ENCODE measurements at regions of chr10 and their contacts with region 1.

Region 1: DNA sequence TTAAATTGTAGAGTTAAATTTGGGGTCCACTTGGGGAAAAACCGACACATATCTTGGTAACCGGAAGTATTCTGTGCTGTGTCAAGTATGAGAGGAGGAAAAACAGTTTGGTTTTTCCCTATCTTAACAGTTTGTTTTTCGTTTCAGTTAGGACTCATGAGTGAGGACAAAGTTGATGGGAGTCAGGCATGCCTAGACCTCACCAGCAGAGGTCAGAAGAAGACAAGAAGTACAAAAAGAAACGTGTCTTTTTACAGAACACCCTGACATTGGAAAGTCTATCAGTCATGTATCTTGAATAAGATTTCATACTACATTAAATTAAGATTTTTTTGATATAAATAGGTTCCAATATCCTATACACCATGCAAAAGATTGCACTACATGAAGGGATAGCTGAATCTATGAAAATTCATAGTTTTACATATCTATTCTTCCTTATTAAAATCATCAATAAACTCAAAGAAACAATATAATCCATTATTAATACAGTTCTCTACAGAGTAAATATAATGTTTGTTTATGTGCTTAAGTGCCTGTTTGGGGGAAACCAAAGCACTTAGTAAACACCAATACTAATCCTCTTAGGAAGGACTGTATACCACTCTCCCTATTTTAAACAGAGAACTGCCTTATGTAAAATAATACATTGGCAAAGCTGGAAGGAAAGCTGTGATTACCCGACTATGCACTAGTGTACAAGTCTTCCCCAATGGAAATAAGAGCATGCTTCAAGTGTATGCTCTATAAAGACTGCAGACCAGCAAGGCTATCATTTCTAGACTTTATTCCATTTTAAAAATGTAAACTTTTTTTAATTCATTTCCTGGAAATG is 95.6 kb downstream of the USP6NL start:
- DNase-seq: no peak
- H3K4me3 Mint-ChIP-seq: no peak overlapping the region
- H3K27ac Mint-ChIP-seq: no peak overlapping the region
- H3K4me1 Mint-ChIP-seq: peaks cover 11% of the 10 kb centered on the region
- H3K27me3 Mint-ChIP-seq: peaks cover 55% of the 10 kb centered on the region

Region 2: DNA sequence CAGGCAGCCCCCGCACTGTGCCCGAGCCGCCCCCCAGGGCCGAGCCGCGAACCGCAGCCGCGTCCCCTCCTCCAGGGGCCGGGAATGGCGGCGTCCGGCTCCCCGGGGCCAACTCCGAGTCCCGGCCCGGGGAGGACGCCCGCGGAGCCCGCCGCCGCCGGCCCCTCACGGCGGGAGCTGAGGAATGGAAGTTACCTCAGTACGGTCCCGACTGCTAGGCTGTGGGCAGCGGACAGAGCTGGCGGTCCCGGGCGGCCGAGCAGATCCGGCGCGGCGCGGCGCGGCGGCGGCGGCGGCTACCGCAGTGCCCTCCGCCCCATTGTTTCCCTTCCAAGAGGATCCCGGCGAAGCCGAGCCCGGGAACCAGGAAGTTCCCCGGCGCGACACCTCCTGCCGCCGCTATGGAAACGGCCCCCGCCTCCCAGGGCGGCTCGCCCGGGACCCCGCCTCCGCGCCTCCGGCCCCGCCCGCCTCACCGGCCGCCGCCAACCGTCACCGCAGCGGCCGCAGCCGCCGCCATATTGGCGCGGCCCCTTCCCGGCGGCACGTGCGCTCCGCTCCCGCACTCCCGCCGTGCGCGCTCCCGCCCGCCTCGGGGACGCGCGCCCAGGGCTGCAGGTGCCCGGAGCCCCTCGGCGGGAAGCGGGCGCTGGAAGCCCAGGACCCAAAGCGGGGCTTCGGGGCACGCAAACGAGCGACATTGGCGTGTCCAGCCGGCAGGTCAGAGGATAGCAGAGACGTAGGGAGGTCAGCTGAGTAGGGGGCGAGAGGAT is 95.6 kb after region 1 on chr10 and contains the start of gene USP6NL:
- intact Hi-C with region 1: loop called (anchors 5 kb)
- DNase-seq: peak; percentile 50
- H3K4me3 Mint-ChIP-seq: peak within 1 kb of the TSS; percentile 81
- H3K27ac Mint-ChIP-seq: no peak within 1 kb of the TSS
- H3K4me1 Mint-ChIP-seq: peaks cover 13% of the 10 kb centered on the region
- H3K27me3 Mint-ChIP-seq: peaks cover 60% of the 10 kb centered on the region
- total RNA-seq, gene USP6NL: 0.39 and 0.50 TPM in 2 replicates

Region 3: DNA sequence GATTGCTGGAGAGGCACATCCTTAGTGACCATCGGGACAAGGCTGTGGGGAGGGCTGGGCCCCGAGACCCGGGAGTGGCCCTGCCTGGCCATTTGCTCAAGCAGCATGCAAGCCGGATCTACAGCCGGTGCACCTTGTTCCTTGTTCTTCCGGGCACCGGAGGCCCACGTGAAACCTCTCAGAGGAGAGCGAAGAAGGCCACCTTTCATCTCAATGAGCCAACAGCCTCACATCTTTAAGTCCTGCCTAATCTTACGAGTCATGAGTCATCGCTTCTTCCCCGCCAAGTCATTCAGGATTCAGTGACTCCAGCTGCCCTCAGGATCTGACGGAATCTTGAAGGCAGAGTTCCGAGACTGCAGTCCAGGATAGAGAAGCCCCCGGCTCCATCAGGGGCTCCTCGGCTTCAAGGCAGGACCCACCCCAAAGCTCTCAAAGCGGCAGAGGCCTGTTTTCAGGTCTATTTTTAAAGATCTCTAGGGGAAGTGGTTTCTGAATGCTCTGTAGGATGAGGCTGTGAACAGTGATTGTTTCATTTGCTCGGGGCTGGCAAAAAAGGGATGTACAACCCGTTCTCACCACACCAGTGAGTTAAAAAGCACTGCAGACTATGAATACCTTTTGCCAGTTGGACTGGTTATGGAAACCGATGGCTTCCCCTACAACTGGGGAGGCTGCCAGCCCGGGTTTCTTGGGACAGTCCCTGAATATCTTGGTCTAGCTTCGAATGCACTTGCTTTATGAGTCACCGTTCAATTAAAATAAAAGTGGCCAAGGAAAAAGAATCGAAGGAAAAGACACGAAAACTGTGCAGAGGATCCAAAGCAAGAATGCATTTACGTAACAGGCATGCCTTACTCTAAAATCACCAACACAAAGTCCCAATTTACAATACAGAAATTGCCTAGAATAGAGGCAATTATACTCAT is 169.2 kb after region 1 on chr10:
- intact Hi-C with region 1: loop called (anchors 10 kb)
- DNase-seq: peak; percentile 48
- H3K4me3 Mint-ChIP-seq: peak overlapping the region; percentile 48
- H3K27ac Mint-ChIP-seq: peak overlapping the region; percentile 54
- H3K4me1 Mint-ChIP-seq: peaks cover 21% of the 10 kb centered on the region
- H3K27me3 Mint-ChIP-seq: peaks cover 49% of the 10 kb centered on the region

Region 4: DNA sequence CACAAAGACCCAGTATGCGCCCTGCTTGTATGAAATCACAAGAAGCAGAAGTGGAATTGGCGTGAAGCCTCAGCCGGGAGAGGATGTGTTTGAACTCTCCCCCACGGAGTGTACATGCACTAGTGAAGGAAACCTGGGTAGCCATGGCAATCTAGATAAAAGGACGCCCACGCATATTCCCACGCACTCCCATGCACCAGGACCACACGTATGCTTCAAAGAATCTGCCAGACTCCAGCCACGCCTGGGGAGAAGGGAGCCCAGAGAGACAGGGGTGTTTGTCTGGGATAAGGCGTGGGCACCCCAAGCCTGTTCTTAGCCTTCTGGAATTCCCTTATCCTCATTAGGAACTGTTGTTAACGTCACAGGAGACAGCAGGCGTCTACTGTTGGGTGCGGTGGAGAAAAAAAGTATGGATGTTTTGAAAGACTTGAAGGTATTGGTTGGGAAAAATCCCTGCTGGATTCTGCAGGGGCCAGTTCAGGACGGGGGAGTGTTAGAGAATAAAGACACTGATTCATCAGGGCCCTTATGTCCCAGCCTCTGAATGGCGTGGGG is 197.5 kb after region 1 on chr10:
- intact Hi-C with region 1: loop called (anchors 5 kb)
- DNase-seq: no peak
- H3K4me3 Mint-ChIP-seq: no peak overlapping the region
- H3K27ac Mint-ChIP-seq: no peak overlapping the region
- H3K4me1 Mint-ChIP-seq: peaks cover 13% of the 10 kb centered on the region
- H3K27me3 Mint-ChIP-seq: peaks cover 71% of the 10 kb centered on the region

Region 5: DNA sequence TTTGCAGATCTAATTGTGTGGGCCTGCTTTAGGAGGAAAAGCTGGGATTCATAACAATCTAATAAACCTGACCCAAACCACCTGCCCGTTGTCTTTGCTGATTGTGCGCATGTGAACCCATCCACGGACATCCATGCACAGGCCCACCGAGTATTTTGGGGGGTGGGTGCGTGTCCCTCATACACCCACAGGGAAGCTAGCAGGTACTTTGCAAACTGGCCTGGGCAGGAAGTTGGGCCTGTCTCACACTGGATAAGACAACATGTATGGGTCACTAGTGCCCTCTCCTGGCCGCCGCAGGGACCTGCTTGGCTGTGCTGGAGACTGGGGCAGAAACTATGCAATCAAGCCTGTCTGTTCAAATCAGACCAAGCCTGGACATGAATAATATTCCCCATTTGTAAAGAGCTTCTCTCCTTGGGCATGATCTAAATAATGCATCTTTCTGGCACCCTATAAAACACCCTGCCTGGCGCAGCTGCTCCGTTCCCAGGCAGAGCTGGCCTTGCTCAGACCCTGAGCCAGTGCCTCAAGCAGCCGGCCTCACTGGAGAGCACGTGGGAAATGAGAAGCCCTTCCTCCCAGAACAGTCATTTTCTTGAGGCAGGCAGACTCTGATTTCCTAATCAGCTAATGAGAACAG is 242.1 kb after region 1 on chr10:
- intact Hi-C with region 1: loop called (anchors 1 kb)
- DNase-seq: peak; percentile 70
- H3K4me3 Mint-ChIP-seq: no peak overlapping the region
- H3K27ac Mint-ChIP-seq: no peak overlapping the region
- H3K4me1 Mint-ChIP-seq: peaks cover 1% of the 10 kb centered on the region
- H3K27me3 Mint-ChIP-seq: peaks cover 7% of the 10 kb centered on the region